ENCODE measurements at regions of chr1 and their contacts with region 1.

Region 1: DNA sequence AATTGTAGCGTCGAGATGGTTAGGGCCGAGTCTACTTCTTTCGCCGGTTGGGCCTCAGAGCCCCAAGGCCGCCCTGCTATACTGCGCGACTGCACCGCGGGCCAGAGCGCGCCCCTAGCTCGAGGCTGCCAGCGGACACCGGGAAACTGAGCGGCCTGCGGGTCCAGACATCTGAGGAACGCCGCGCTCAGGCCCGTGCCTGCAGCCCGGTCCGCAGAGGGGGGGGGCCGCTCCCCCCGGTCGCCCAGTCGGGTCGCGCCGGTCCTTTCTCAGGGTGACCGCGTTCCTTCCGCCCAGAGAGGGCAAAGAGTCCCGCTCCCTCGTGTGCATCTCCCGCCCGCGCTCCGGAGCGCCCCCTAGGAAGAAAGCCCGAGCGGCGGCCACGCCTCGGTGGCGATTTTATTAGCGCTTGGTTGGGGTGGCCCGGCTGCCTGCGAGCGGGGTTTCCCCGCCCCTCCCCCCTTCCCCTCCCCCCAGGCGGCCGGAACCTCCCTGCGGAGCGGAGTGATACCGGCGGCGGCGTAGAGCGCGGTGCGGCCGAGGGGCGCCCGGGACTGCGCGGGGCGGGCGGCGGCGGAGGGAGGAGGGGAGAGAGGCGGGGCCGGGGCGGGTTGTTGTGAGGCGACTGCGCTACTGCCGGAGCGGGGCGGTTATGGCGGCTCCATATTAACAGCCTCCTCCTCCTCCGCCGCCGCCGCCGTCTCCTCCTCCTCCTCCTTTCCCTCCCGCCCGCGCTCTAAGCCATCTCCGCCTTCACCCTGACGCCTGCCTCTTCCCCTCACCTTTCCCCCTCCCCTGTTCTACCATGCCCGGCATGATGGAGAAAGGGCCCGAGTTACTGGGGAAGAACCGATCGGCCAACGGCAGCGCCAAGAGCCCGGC is at the start of gene RCOR3:
- DNase-seq: no peak
- H3K4me3 ChIP-seq: peak within 1 kb of the TSS; percentile 99
- H3K27me3 ChIP-seq: no peaks in the 10 kb centered on the region
- CTCF ChIP-seq: peak; percentile 59
- polyA plus RNA-seq, gene RCOR3: 27.7 and 36.3 TPM in 2 replicates

Region 2: DNA sequence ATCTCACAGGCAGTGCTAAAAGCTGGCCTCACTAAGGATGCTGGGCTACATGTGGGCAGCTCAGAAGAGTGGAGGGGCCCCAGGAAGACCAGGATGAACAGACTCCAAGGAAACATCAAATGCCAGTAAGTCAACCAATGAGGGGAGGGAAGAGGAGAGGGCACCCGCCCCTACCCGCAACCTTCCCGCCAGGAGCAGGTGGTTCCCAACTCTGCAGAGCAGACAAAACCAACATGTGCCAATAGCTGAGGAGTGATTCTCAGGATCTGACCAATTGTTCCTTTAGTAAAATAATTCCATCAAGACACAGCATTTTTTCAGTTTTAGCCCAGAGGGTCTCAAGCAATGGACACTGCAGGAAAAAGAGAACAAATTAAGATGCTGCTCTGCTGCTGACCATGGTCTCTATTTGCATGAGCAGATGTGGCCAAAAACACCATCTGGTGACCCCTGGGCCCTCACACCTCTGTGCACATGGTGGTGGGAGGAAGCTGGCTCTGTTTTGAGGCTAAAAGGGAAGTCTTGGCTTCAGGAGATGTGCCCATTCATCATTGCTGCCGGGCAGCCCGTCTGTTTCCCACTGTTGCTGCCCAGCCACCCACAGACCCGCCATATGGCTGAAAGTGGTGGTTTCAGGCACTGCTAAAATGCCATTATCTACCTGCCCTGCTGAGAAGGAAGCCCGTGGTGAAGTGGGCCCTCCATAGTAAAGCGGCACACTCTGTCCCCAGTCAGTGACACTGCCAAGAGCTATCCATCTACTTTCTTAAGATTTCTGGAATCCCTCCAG is 356.8 kb before region 1 on chr1:
- CTCF ChIA-PET with region 1: no interaction called
- POLR2A ChIA-PET with region 1: no interaction called
- DNase-seq: no peak
- H3K4me3 ChIP-seq: no peak overlapping the region
- H3K27me3 ChIP-seq: no peaks in the 10 kb centered on the region
- CTCF ChIP-seq: no peak

Region 3: GRCh38 chr1:211281320-211282022 is 22.5 kb after region 1 on chr1:
- CTCF ChIA-PET with region 1: interaction called, 3 read pairs
- POLR2A ChIA-PET with region 1: interaction called, 10 read pairs
- DNase-seq: no peak
- H3K4me3 ChIP-seq: no peak overlapping the region
- H3K27me3 ChIP-seq: no peaks in the 10 kb centered on the region
- CTCF ChIP-seq: no peak

Measured in BJ (cell line).